Posterior vena cava (tissue), 2 donors: ENCODE measurements at regions of chr13 and their contacts with region 1.

Region 1: GRCh38 chr13:76812206-76812897 is 73.9 kb downstream of the KCTD12 start:
- DNase-seq: peak; percentile 75

Region 2: DNA sequence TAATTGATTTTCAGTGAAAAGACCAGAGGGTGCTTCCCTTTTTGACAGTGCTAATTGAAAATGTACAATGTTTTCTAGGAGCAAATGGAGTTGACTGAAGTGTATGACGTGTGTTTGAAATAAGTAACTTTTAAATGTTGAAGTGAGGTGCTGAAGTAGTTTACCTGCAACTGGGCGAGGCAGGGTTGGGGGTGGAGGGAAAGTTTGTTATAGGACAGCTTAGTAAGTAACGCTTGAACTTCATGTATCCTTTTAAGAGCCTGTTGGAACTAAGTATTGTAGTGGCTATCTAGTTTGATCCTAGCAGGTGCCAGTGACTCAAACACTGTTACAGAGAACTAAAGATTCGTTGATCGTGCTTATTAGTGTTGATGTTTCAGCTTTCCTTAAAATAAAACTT is 891.1 kb after region 1 on chr13:
- intact Hi-C with region 1: loop called in 1 of 2 experiments (anchors 10 kb)
- DNase-seq: no peak